Cardiac septum (tissue), 1 donor: ENCODE measurements at regions of chr6 and their contacts with region 1.

Region 1: GRCh38 chr6:45709781-45710220 is 305.9 kb downstream of the CLIC5 start:
- DNase-seq: no peak

Region 2: GRCh38 chr6:45305546-45305945 is 404.3 kb before region 1 on chr6:
- intact Hi-C with region 1: loop called (anchors 10 kb)
- DNase-seq: no peak

Region 3: GRCh38 chr6:45786355-45786781 is 76.6 kb after region 1 on chr6:
- intact Hi-C with region 1: no loop called
- DNase-seq: no peak

Region 4: DNA sequence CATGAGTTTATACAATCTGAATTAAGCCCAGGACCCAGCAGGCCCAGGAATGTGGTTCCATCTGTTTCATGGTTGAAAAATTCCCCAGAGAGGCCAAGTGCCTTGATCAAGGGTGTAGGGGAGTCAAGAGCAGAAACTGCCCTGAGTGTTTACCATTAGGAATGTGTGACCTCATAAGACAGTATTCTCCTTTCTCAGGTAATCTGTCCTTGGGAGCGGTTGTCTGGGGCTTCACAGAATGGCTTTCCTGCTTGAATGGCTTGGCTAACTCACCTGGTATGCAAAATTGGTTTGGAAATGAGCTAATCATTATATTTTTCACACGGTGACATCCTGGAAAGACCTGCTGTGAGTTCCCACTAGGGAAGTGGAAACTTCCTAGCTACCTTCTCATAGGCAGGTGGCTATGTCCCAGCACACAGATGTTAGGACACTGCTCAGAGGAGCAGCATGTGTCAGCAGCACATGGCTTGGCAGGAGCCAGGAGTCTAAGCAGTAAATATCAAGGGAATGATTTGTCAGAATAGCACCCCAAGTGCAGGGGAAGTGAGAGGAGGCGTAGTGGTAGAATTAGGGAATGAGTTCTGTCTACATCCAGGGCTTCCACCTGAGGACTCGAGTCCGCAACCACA is 288.2 kb after region 1 on chr6:
- intact Hi-C with region 1: no loop called
- DNase-seq: no peak